ENCODE measurements at regions of chr17 and their contacts with region 1.

Region 1: DNA sequence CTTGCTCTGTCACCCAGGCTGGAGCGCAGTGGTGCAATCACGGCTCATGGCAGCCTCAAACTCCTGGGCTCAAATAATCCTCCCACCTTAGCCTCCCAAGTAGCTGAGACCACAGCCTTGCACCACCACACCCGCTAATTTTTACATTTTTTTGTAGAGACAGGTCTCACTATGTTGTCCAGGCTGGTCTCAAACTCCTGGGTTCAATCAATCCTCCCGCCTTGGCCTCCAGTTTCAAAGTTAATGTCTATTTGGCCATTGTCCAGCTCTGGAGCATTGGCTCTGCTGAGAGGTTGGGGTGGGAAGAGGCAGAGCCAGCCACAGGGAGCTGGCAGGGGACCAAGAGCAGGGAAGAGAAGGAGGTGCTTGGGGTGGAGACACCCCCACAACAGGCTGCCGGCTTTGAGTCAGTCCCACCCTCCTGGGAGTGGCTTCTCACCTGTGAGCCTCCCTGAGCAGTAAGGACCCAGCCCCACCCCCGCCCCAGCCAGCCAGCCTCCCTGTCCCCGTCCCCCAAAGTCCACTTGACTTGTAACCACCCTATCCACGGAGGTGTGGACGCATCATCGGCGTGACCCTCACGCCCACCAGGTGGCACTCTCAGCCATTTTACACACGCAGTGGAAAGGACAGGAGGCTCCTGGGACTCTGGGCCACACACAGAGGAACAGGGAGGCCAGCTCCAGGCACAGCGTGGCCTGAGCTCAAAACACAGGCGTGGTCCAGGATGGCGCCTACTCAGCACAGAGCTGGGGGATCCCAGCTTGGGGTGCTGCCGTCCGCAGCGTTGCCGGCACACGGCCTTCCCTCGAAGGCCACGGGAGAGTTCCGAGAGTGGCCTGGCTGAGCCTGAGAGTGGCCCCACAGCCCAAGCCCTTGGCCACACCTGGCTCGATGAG is 22.8 kb upstream of the PVALEF start:
- DNase-seq: peak; percentile 85
- H3K4me3 ChIP-seq: no peak overlapping the region
- H3K27ac ChIP-seq: peak overlapping the region; percentile 8
- H3K4me1 ChIP-seq: peaks cover 11% of the 10 kb centered on the region
- H3K27me3 ChIP-seq: no peaks in the 10 kb centered on the region
- CTCF ChIP-seq: peak; percentile 85

Region 2: DNA sequence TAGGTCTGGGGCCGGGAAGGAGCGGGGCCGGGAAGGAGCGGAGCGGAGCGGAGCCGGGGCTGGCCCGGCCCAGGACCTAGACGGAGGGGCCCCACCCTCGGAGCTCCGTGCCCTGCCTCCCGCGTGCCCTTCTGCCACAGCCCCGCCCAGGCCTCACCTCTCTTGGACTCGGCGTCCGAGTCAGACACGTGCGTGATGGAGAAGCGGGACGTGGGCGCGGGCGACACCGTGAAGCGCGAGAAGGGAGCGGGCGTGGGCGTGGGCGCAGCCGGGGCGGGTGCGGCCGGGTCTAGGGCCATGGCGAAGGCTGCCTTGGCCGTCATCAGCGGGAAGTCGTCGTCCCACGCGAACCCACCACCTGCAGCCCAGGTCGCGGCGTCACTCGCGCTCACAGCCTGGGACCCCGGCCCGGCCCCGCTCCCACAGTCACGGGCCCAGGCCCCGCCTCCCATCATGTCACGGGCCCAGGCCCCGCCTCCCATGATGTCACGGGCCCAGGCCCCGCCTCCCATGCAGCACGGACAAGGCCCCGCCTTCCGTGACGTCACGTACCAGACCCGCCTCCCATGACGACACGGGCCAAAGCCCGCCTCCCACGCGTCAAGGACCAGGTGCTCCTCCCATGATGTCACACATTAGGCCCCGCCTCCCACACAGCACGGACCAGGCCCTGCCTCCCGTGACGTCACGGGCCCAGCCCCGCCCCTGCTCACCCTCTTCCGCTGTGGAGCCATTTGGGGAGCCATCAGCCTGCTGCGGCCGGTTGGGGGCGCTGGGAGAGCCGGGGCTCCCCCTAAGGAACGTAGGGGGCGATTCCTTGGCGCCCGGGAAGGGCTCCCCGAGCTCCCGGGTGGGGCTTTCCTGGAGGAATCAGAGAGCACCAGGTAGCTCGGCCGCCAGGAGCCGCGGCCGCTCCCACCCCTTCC is 23.1 kb before region 1 on chr17:
- CTCF ChIA-PET with region 1: no interaction called
- POLR2A ChIA-PET with region 1: no interaction called
- intact Hi-C with region 1: no loop called
- DNase-seq: peak; percentile 96
- H3K4me3 ChIP-seq: peak overlapping the region; percentile 55
- H3K27ac ChIP-seq: peak overlapping the region; percentile 70
- H3K4me1 ChIP-seq: peaks cover 14% of the 10 kb centered on the region
- H3K27me3 ChIP-seq: no peaks in the 10 kb centered on the region
- CTCF ChIP-seq: peak; percentile 73

Region 3: DNA sequence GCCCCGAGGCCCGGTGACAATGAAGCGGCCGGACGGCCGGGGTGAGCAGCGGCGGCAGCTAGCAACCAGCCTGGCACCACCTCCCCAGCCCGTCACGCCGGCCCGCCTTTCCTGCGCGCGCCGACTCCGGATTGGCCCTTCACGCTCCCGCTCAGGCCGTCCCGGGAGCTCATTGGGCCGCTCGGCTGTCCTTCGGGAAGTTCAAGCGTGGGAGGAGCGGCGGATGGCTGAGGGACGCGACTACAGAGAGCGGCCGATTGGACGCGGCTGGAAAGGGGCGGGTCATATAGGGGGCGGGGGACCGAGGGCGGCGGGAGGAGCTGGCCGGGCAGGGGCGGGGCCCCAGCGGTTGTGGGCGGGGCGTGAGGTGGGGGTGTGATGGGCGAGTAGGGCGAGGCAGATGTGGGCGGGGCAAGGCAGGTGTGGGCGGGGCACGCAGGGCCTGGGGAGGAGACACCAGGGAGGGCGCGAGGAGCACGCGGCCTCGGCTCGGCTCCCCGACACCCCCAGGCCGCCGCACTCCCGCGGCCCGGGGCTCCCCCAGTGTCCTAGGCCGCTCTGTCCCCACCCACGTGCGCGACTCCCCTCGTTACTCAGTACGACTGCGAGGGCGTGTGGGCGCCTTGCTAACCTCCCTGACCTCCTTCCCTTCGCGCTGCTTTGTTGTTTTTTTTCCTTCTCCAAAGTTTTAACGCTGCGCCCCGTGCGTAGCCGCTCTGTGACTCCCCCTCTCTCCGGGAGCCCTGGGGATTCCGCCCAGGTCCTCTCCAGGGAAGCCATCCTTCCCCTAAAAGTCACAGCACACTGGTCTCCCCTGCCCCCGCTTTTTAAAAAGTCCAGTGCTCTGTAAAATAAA is 80.6 kb after region 1 on chr17 and contains the start of gene CEP131:
- CTCF ChIA-PET with region 1: no interaction called
- POLR2A ChIA-PET with region 1: interaction called, 15 read pairs
- intact Hi-C with region 1: no loop called
- DNase-seq: peak; percentile 99
- H3K4me3 ChIP-seq: peak within 1 kb of the TSS; percentile 98
- H3K27ac ChIP-seq: peak within 1 kb of the TSS; percentile 79
- H3K4me1 ChIP-seq: peaks cover 10% of the 10 kb centered on the region
- H3K27me3 ChIP-seq: no peaks in the 10 kb centered on the region
- CTCF ChIP-seq: no peak
- total RNA-seq, gene CEP131: 27.1 and 36.3 TPM in 2 replicates